PC-3 (cell line): ENCODE measurements at regions of chr2 and their contacts with region 1.

Region 1: GRCh38 chr2:53987336-53987921 is 16.6 kb upstream of the PSME4 start:
- DNase-seq: peak; percentile 95
- ATAC-seq: peak; percentile 68
- H3K4me3 ChIP-seq: no peak overlapping the region
- H3K27ac ChIP-seq: peak overlapping the region; percentile 87
- H3K4me1 ChIP-seq: peaks cover 37% of the 10 kb centered on the region
- H3K27me3 ChIP-seq: no peaks in the 10 kb centered on the region
- CTCF ChIP-seq: no peak

Region 2: GRCh38 chr2:53970724-53971602 is 16.5 kb before region 1 on chr2 and contains the start of gene PSME4:
- CTCF ChIA-PET with region 1: no interaction called
- POLR2A ChIA-PET with region 1: no interaction called
- intact Hi-C with region 1: loop called (anchors 1 kb)
- DNase-seq: peak; percentile 85
- ATAC-seq: peak; percentile 80
- H3K4me3 ChIP-seq: peak within 1 kb of the TSS; percentile 91
- H3K27ac ChIP-seq: peak within 1 kb of the TSS; percentile 58
- H3K4me1 ChIP-seq: peaks cover 21% of the 10 kb centered on the region
- H3K27me3 ChIP-seq: no peaks in the 10 kb centered on the region
- CTCF ChIP-seq: no peak
- total RNA-seq, gene PSME4: 54.7 and 70.6 TPM in 2 replicates

Region 3: GRCh38 chr2:54015798-54016699 is 28.6 kb after region 1 on chr2:
- CTCF ChIA-PET with region 1: no interaction called
- POLR2A ChIA-PET with region 1: no interaction called
- intact Hi-C with region 1: loop called (anchors 2 kb)
- DNase-seq: peak; percentile 70
- ATAC-seq: peak; percentile 98
- H3K4me3 ChIP-seq: no peak overlapping the region
- H3K27ac ChIP-seq: peak overlapping the region; percentile 9; the same call in 1 of the 2 replicates
- H3K4me1 ChIP-seq: peaks cover 11% of the 10 kb centered on the region
- H3K27me3 ChIP-seq: no peaks in the 10 kb centered on the region
- CTCF ChIP-seq: no peak

Region 4: DNA sequence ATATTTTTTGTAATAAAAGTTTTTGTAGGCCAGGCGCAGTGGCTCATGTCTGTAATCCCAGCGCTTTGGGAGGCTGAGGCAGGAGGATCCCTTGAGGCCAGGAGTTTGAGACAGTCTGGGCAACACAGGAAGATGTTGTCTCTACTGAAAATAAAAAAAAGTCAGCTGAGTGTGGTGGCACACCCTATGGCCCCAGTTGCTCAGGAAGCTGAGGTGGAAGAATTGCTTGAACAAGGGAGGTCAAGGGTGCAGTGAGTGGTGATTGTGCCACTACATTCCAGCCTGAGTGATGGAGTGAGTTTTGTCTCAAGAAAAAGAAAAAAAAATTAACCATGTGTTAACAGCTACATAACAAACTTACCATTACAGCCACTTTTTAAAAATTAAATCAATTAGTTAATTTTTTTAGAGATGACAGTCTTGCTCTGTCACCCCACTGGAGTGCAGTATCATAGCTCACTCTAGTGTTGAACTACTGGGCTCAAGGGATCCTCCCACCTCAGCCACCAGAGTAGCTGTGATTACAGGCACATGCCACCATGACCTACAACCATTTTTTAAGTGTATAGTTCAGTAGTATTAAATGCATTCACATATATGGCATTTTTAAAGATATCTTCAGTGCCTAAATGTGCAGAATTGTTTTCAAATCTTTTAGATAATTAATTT is 60.8 kb after region 1 on chr2:
- CTCF ChIA-PET with region 1: no interaction called
- POLR2A ChIA-PET with region 1: no interaction called
- intact Hi-C with region 1: loop called (anchors 2 kb)
- DNase-seq: no peak
- ATAC-seq: no peak
- H3K4me3 ChIP-seq: no peak overlapping the region
- H3K27ac ChIP-seq: no peak overlapping the region
- H3K4me1 ChIP-seq: peaks cover 15% of the 10 kb centered on the region
- H3K27me3 ChIP-seq: no peaks in the 10 kb centered on the region
- CTCF ChIP-seq: no peak

Region 5: GRCh38 chr2:54073797-54074196 is 86.4 kb after region 1 on chr2:
- CTCF ChIA-PET with region 1: no interaction called
- POLR2A ChIA-PET with region 1: no interaction called
- intact Hi-C with region 1: loop called (anchors 2 kb)
- DNase-seq: peak; percentile 96
- ATAC-seq: peak; percentile 80
- H3K4me3 ChIP-seq: no peak overlapping the region
- H3K27ac ChIP-seq: peak overlapping the region; percentile 92
- H3K4me1 ChIP-seq: peaks cover 23% of the 10 kb centered on the region
- H3K27me3 ChIP-seq: no peaks in the 10 kb centered on the region
- CTCF ChIP-seq: no peak